ENCODE measurements at regions of chr3 and their contacts with region 1.

Region 1: GRCh38 chr3:66822186-66823008 is 175.7 kb upstream of the KBTBD8 start:
- DNase-seq: peak; percentile 9
- ATAC-seq: peak; percentile 99
- H3K4me3 ChIP-seq: no peak overlapping the region
- H3K27ac ChIP-seq: no peak overlapping the region
- H3K4me1 ChIP-seq: no peaks in the 10 kb centered on the region
- H3K27me3 ChIP-seq: no peaks in the 10 kb centered on the region
- CTCF ChIP-seq: peak; percentile 70 to 82 (median 77)
- EP300 ChIP-seq: no peak
- POLR2A ChIP-seq: no peak
- RAD21 ChIP-seq: peak; percentile 70

Region 2: DNA sequence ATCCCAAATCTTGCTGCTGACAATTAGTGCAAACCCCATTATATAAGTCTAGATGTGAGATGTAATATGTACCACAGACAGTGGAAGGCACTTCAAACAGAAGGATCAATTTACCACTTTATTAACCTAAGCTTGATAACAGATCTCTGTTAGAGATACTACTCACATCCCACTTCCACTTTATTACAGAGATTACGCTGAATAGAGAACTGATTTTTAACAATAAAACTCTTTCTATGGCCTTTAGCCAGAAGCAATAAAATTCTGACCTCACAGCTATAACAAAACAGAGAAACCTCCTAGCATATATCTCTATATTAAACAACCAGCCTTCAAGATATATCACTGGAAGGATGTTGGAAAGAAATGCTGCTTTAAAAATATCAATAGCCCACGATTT is 1301.4 kb before region 1 on chr3:
- CTCF ChIA-PET with region 1: no interaction called
- POLR2A ChIA-PET with region 1: no interaction called
- RAD21 ChIA-PET with region 1: no interaction called
- SMC1A ChIA-PET with region 1: no interaction called
- in situ Hi-C with region 1: no loop called
- intact Hi-C with region 1: no loop called
- DNase-seq: no peak
- ATAC-seq: no peak
- H3K4me3 ChIP-seq: no peak overlapping the region
- H3K27ac ChIP-seq: no peak overlapping the region
- H3K4me1 ChIP-seq: no peaks in the 10 kb centered on the region
- H3K27me3 ChIP-seq: no peaks in the 10 kb centered on the region
- CTCF ChIP-seq: no peak
- EP300 ChIP-seq: no peak
- POLR2A ChIP-seq: no peak
- RAD21 ChIP-seq: no peak

Region 3: GRCh38 chr3:66138336-66139313 is 683.8 kb before region 1 on chr3:
- CTCF ChIA-PET with region 1: no interaction called
- POLR2A ChIA-PET with region 1: no interaction called
- RAD21 ChIA-PET with region 1: no interaction called
- SMC1A ChIA-PET with region 1: no interaction called
- in situ Hi-C with region 1: no loop called
- intact Hi-C with region 1: no loop called
- DNase-seq: no peak
- ATAC-seq: peak; percentile 80
- H3K4me3 ChIP-seq: no peak overlapping the region
- H3K27ac ChIP-seq: no peak overlapping the region
- H3K4me1 ChIP-seq: no peaks in the 10 kb centered on the region
- H3K27me3 ChIP-seq: no peaks in the 10 kb centered on the region
- CTCF ChIP-seq: peak; percentile 52 to 57 (median 55); a peak in 5 of 6 replicates
- EP300 ChIP-seq: no peak
- POLR2A ChIP-seq: no peak
- RAD21 ChIP-seq: peak; percentile 64

Region 4: DNA sequence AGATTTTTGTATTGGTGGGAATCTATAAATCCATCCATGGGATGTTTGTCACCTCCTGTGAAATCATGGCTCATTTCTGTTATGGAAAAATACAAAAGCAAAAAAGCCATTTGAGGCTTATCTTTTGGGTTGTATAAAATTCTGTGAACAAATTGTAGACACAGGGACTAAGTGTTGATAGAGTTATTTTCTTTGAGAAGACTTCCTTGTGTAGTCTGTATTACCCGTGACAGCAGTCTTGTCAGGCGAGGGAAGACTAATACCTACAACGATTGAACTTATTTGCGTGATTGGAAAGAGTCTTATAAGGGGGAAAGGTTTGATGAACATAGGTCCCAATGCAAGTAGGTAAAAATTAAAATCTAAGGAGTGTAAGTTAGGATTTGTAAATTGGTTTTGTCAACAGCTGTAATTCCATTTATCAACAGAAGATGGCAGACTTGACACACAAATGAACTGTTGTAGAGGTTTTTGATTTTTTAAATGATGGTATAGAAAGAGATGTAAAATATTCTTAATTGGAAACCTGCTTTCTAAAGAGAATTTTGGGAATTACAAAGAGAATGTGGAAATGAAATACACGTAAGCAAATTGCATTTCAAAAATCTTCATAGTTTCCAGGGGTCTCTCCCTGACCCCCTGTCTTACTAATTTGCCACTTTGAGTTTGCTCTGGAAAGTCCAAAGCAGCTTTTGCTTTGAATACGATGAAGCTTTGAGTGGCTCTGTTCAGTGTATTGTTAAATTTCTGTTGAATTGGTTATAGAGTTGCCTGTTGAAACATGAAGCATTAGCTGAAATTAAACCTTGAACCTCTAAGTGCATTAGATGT is 568.4 kb before region 1 on chr3:
- CTCF ChIA-PET with region 1: interaction called, 100 read pairs
- POLR2A ChIA-PET with region 1: no interaction called
- RAD21 ChIA-PET with region 1: interaction called, 19 read pairs
- SMC1A ChIA-PET with region 1: interaction called, 70 read pairs
- in situ Hi-C with region 1: no loop called
- intact Hi-C with region 1: no loop called
- DNase-seq: no peak
- ATAC-seq: peak; percentile 62
- H3K4me3 ChIP-seq: no peak overlapping the region
- H3K27ac ChIP-seq: no peak overlapping the region
- H3K4me1 ChIP-seq: no peaks in the 10 kb centered on the region
- H3K27me3 ChIP-seq: no peaks in the 10 kb centered on the region
- CTCF ChIP-seq: peak; percentile 44 to 62 (median 55); a peak in 4 of 6 replicates
- EP300 ChIP-seq: no peak
- POLR2A ChIP-seq: no peak
- RAD21 ChIP-seq: peak; percentile 66

Region 5: DNA sequence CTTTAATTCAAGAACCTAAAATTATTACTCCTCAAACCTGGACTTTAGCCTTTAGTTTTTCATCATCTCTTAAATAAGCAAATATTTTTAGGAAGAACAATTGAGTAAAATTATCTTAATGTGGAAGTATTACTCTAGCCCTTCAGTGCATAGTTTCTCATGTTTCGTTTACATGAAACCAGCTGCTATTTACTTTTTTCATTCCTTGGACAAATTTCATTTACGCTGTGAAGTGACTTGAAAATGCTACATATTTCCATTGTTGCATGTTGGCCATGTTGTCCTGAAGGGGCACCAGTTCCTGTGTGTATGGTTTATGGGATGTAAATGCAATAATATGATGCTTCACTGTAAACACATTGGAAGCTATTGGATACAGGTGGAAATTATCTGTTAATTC is 551.7 kb before region 1 on chr3:
- CTCF ChIA-PET with region 1: interaction called, 16 read pairs
- POLR2A ChIA-PET with region 1: no interaction called
- RAD21 ChIA-PET with region 1: no interaction called
- SMC1A ChIA-PET with region 1: interaction called, 3 read pairs
- in situ Hi-C with region 1: loop called (anchors 5 kb)
- intact Hi-C with region 1: no loop called
- DNase-seq: no peak
- ATAC-seq: no peak
- H3K4me3 ChIP-seq: no peak overlapping the region
- H3K27ac ChIP-seq: no peak overlapping the region
- H3K4me1 ChIP-seq: no peaks in the 10 kb centered on the region; the same call in 1 of the 2 replicates
- H3K27me3 ChIP-seq: no peaks in the 10 kb centered on the region
- CTCF ChIP-seq: no peak
- EP300 ChIP-seq: no peak
- POLR2A ChIP-seq: no peak
- RAD21 ChIP-seq: no peak

Region 6: GRCh38 chr3:66378256-66378823 is 444.1 kb before region 1 on chr3:
- CTCF ChIA-PET with region 1: interaction called, 10 read pairs
- POLR2A ChIA-PET with region 1: no interaction called
- RAD21 ChIA-PET with region 1: interaction called, 3 read pairs
- SMC1A ChIA-PET with region 1: no interaction called
- in situ Hi-C with region 1: no loop called
- intact Hi-C with region 1: no loop called
- DNase-seq: no peak
- ATAC-seq: peak; percentile 61
- H3K4me3 ChIP-seq: no peak overlapping the region
- H3K27ac ChIP-seq: no peak overlapping the region
- H3K4me1 ChIP-seq: no peaks in the 10 kb centered on the region
- H3K27me3 ChIP-seq: no peaks in the 10 kb centered on the region
- CTCF ChIP-seq: peak; percentile 40 to 67 (median 63)
- EP300 ChIP-seq: no peak
- POLR2A ChIP-seq: no peak
- RAD21 ChIP-seq: peak; percentile 40

Region 7: DNA sequence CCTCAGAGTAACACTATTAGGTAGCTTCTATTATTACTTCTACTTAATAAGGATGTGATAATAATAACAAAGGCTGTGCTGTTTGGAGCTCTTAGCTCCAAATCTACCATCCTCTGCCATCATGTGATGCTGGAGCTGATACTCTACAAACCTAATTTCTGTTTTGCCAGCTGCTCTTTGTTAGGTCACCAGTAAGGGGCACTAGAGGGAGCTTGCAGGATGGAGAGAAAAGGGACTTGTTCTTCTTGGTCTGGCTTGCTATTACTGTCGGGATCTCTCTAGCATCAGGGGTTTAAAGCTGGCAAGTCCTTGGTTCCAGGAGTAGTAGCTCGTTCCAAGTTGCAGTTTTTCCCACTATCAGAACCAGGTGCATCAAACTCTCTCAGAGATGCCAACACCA is 19.2 kb before region 1 on chr3:
- CTCF ChIA-PET with region 1: interaction called, 18 read pairs
- POLR2A ChIA-PET with region 1: no interaction called
- RAD21 ChIA-PET with region 1: interaction called, 3 read pairs
- SMC1A ChIA-PET with region 1: interaction called, 5 read pairs
- in situ Hi-C with region 1: no loop called
- intact Hi-C with region 1: no loop called
- DNase-seq: no peak
- ATAC-seq: no peak
- H3K4me3 ChIP-seq: no peak overlapping the region
- H3K27ac ChIP-seq: no peak overlapping the region
- H3K4me1 ChIP-seq: no peaks in the 10 kb centered on the region
- H3K27me3 ChIP-seq: no peaks in the 10 kb centered on the region; a peak in 2 of 4 replicates
- CTCF ChIP-seq: no peak
- EP300 ChIP-seq: no peak
- POLR2A ChIP-seq: no peak
- RAD21 ChIP-seq: no peak

Measured in GM12878 (cell line).